Calu3 (cell line): ENCODE measurements at regions of chr6 and their contacts with region 1.

Region 1: GRCh38 chr6:81451787-81452186 is 300.7 kb downstream of the TENT5A start:
- DNase-seq: peak; percentile 16
- H3K4me3 Mint-ChIP-seq: no peak overlapping the region
- H3K27ac Mint-ChIP-seq: no peak overlapping the region
- H3K4me1 Mint-ChIP-seq: peaks cover 7% of the 10 kb centered on the region
- H3K27me3 Mint-ChIP-seq: no peaks in the 10 kb centered on the region
- CTCF ChIP-seq: no peak

Region 2: DNA sequence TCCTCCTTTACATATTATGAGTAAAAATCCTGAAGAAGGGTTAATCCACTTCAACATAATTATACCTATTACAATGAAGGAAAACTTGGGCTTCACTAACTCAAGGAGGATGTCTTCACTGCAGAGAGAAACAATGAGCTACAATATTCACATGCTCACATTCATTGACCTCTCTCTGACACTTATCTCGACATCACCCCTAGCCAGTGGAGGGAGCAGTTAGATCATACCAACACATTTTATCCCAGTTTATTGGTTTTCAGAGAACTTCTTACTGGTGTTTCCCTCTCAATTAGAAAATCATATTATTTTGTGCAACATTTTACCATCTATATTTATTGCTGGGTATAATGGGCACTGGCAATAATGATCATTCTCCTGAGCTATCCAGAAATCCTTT is 345.8 kb before region 1 on chr6:
- CTCF ChIA-PET with region 1: no interaction called
- intact Hi-C with region 1: loop called (anchors 10 kb)
- DNase-seq: no peak
- H3K4me3 Mint-ChIP-seq: no peak overlapping the region
- H3K27ac Mint-ChIP-seq: no peak overlapping the region
- H3K4me1 Mint-ChIP-seq: no peaks in the 10 kb centered on the region
- H3K27me3 Mint-ChIP-seq: no peaks in the 10 kb centered on the region
- CTCF ChIP-seq: no peak

Region 3: GRCh38 chr6:81436990-81437389 is 14.8 kb before region 1 on chr6:
- CTCF ChIA-PET with region 1: no interaction called
- intact Hi-C with region 1: no loop called
- DNase-seq: no peak
- H3K4me3 Mint-ChIP-seq: no peak overlapping the region
- H3K27ac Mint-ChIP-seq: no peak overlapping the region
- H3K4me1 Mint-ChIP-seq: no peaks in the 10 kb centered on the region
- H3K27me3 Mint-ChIP-seq: no peaks in the 10 kb centered on the region
- CTCF ChIP-seq: no peak